ENCODE measurements at regions of chr11 and their contacts with region 1.

Region 1: GRCh38 chr11:105862736-105863367 is 159.2 kb downstream of the MSANTD4 start:
- DNase-seq: peak in 1 of 2 experiments; percentile 50
- H3K4me3 ChIP-seq: no peak overlapping the region
- H3K4me3 Mint-ChIP-seq: no peak overlapping the region
- H3K27ac Mint-ChIP-seq: no peak overlapping the region
- H3K4me1 ChIP-seq: no peaks in the 10 kb centered on the region
- H3K4me1 Mint-ChIP-seq: no peaks in the 10 kb centered on the region
- H3K27me3 ChIP-seq: no peaks in the 10 kb centered on the region
- H3K27me3 Mint-ChIP-seq: peaks cover 2% of the 10 kb centered on the region
- CTCF ChIP-seq: peak; percentile 77 to 84

Region 2: DNA sequence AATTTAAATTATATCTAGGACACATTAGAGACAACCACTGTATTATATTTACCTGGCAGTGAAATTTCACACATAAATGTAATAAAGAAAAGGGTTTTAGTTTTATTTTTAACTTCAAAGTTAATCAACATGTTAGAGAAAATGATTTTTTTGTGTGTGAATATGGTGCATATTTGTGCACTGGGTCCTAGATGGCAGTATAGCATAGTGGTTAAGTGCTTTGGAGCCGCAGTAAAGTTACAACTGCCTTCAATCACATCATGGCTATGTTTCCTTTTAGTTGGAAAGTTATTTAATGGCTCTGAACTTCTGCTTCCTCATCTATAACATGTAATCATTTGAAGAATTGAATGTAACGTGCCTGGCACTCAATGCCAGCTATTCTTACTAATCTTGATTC is 1935.3 kb before region 1 on chr11:
- CTCF ChIA-PET with region 1: no interaction called
- POLR2A ChIA-PET with region 1: no interaction called
- intact Hi-C with region 1: loop called (anchors 5 kb)
- DNase-seq: no peak
- H3K4me3 ChIP-seq: no peak overlapping the region
- H3K4me3 Mint-ChIP-seq: no peak overlapping the region
- H3K27ac Mint-ChIP-seq: no peak overlapping the region
- H3K4me1 ChIP-seq: peaks cover 54% of the 10 kb centered on the region
- H3K4me1 Mint-ChIP-seq: peaks cover 51% of the 10 kb centered on the region
- H3K27me3 ChIP-seq: no peaks in the 10 kb centered on the region
- H3K27me3 Mint-ChIP-seq: no peaks in the 10 kb centered on the region
- CTCF ChIP-seq: peak; percentile 47 to 61

Region 3: GRCh38 chr11:104907521-104908185 is 955.2 kb before region 1 on chr11:
- CTCF ChIA-PET with region 1: no interaction called
- POLR2A ChIA-PET with region 1: no interaction called
- intact Hi-C with region 1: loop called (anchors 10 kb)
- DNase-seq: no peak
- H3K4me3 ChIP-seq: no peak overlapping the region
- H3K4me3 Mint-ChIP-seq: no peak overlapping the region
- H3K27ac Mint-ChIP-seq: no peak overlapping the region
- H3K4me1 ChIP-seq: no peaks in the 10 kb centered on the region
- H3K4me1 Mint-ChIP-seq: no peaks in the 10 kb centered on the region
- H3K27me3 ChIP-seq: no peaks in the 10 kb centered on the region
- H3K27me3 Mint-ChIP-seq: no peaks in the 10 kb centered on the region
- CTCF ChIP-seq: no peak

Region 4: GRCh38 chr11:104997288-104997687 is 865.6 kb before region 1 on chr11:
- CTCF ChIA-PET with region 1: no interaction called
- POLR2A ChIA-PET with region 1: no interaction called
- intact Hi-C with region 1: loop called (anchors 5 kb)
- DNase-seq: peak in 1 of 2 experiments; percentile 38
- H3K4me3 ChIP-seq: no peak overlapping the region
- H3K4me3 Mint-ChIP-seq: no peak overlapping the region
- H3K27ac Mint-ChIP-seq: no peak overlapping the region
- H3K4me1 ChIP-seq: peaks cover 8% of the 10 kb centered on the region; the same call in 1 of the 2 replicates
- H3K4me1 Mint-ChIP-seq: peaks cover 16% of the 10 kb centered on the region
- H3K27me3 ChIP-seq: no peaks in the 10 kb centered on the region
- H3K27me3 Mint-ChIP-seq: no peaks in the 10 kb centered on the region
- CTCF ChIP-seq: peak; percentile 29 to 46

Region 5: DNA sequence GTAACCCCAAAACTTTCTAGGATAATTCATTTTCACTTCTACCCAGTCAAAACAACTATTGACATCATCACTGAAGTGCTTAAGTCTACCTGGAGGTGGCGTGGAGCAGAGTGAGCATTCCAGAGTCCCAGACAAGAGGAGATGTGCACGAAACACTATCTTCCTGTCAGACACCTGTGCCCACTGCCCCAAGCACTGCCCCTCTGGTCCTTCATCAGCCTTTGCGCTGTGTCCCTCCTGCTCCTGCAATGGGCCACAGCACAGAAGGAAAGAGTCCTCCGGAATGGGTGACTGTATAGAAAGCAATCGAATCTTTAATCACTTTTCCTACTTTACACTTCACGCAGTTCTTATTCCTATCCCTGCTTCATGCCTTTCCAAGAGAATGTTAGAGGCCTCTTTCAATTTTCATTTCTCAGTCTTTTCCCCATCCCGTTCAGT is 253.5 kb before region 1 on chr11:
- CTCF ChIA-PET with region 1: no interaction called
- POLR2A ChIA-PET with region 1: no interaction called
- intact Hi-C with region 1: loop called (anchors 1 kb)
- DNase-seq: peak; percentile 47 to 59
- H3K4me3 ChIP-seq: no peak overlapping the region
- H3K4me3 Mint-ChIP-seq: no peak overlapping the region
- H3K27ac Mint-ChIP-seq: no peak overlapping the region
- H3K4me1 ChIP-seq: no peaks in the 10 kb centered on the region
- H3K4me1 Mint-ChIP-seq: no peaks in the 10 kb centered on the region
- H3K27me3 ChIP-seq: no peaks in the 10 kb centered on the region
- H3K27me3 Mint-ChIP-seq: peaks cover 3% of the 10 kb centered on the region
- CTCF ChIP-seq: peak; percentile 71 to 85

Measured in Caco-2 (cell line).